ENCODE measurements at regions of chr3 and their contacts with region 1.

Region 1: GRCh38 chr3:66372681-66373350 is 128.0 kb downstream of the LRIG1 start:
- DNase-seq: peak; percentile 51 to 68
- H3K4me3 ChIP-seq: no peak overlapping the region
- H3K27ac ChIP-seq: no peak overlapping the region
- H3K4me1 ChIP-seq: no peaks in the 10 kb centered on the region
- H3K27me3 ChIP-seq: no peaks in the 10 kb centered on the region
- CTCF ChIP-seq: peak; percentile 76 to 96 (median 87)
- EP300 ChIP-seq: no peak
- POLR2A ChIP-seq: peak in 1 of 2 experiments; percentile 34; a peak in 1 of 3 replicates
- RAD21 ChIP-seq: peak; percentile 95 to 99

Region 2: GRCh38 chr3:66196633-66197032 is 176.2 kb before region 1 on chr3:
- CTCF ChIA-PET with region 1: no interaction called
- POLR2A ChIA-PET with region 1: no interaction called
- DNase-seq: no peak
- H3K4me3 ChIP-seq: no peak overlapping the region
- H3K27ac ChIP-seq: no peak overlapping the region
- H3K4me1 ChIP-seq: peaks cover 0 to 2% (median 0%) of the 10 kb centered on the region in 4 experiments; a peak in 2 of 7 replicates
- H3K27me3 ChIP-seq: no peaks in the 10 kb centered on the region; a peak in 1 of 7 replicates
- CTCF ChIP-seq: no peak
- EP300 ChIP-seq: no peak
- POLR2A ChIP-seq: no peak
- RAD21 ChIP-seq: peak in 1 of 2 experiments; percentile 16; a peak in 2 of 4 replicates

Region 3: GRCh38 chr3:66261355-66261754 is 111.5 kb before region 1 on chr3:
- CTCF ChIA-PET with region 1: interaction called, 90 read pairs
- POLR2A ChIA-PET with region 1: interaction called, 5 read pairs
- DNase-seq: no peak
- H3K4me3 ChIP-seq: no peak overlapping the region
- H3K27ac ChIP-seq: no peak overlapping the region
- H3K4me1 ChIP-seq: no peaks in the 10 kb centered on the region
- H3K27me3 ChIP-seq: no peaks in the 10 kb centered on the region
- CTCF ChIP-seq: no peak
- EP300 ChIP-seq: no peak
- POLR2A ChIP-seq: no peak
- RAD21 ChIP-seq: no peak

Region 4: GRCh38 chr3:66276705-66277274 is 96.0 kb before region 1 on chr3:
- CTCF ChIA-PET with region 1: interaction called, 77 read pairs
- POLR2A ChIA-PET with region 1: interaction called, 3 read pairs
- DNase-seq: peak; percentile 7 to 60
- H3K4me3 ChIP-seq: no peak overlapping the region
- H3K27ac ChIP-seq: no peak overlapping the region
- H3K4me1 ChIP-seq: peaks cover 0 to 3% (median 2%) of the 10 kb centered on the region in 4 experiments; a peak in 2 of 7 replicates
- H3K27me3 ChIP-seq: no peaks in the 10 kb centered on the region
- CTCF ChIP-seq: peak in 2 of 3 experiments; percentile 54 to 72; a peak in 3 of 4 replicates
- EP300 ChIP-seq: no peak
- POLR2A ChIP-seq: no peak
- RAD21 ChIP-seq: peak; percentile 87

Region 5: DNA sequence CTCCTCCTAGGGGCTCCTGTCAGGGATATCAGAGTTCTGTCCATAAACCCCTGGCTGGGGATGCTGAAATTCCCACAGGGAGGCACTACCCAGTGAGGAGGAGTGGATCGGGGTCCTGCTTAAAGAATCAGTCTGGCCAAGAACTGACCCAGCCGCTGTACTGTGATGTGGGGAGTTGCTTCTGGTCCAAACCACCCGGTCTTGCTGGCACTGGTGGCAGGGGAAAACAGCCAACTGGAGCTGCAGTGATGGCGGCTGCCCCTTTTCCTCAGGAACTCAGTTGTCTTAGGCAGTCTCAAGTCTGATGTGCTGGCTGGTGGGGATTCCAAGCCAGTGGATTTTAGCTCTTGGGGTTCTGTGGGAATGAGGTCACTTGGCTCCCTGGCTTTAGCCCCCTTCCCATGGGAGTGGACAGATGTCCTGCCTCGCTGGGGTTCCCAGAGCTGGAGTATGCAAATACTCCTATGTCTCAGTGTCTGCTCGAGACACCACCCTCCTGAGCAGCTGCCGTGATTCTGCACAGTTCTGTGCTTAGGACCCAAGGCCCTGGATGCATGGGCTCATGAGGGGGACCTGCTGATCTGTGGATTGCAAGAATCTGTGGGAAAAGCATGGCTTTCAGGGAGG is 55.0 kb before region 1 on chr3:
- CTCF ChIA-PET with region 1: interaction called, 18 read pairs
- POLR2A ChIA-PET with region 1: no interaction called
- DNase-seq: no peak
- H3K4me3 ChIP-seq: no peak overlapping the region
- H3K27ac ChIP-seq: no peak overlapping the region
- H3K4me1 ChIP-seq: peaks cover 3 to 5% (median 4%) of the 10 kb centered on the region in 4 experiments
- H3K27me3 ChIP-seq: no peaks in the 10 kb centered on the region
- CTCF ChIP-seq: no peak
- EP300 ChIP-seq: no peak
- POLR2A ChIP-seq: no peak
- RAD21 ChIP-seq: no peak

Region 6: DNA sequence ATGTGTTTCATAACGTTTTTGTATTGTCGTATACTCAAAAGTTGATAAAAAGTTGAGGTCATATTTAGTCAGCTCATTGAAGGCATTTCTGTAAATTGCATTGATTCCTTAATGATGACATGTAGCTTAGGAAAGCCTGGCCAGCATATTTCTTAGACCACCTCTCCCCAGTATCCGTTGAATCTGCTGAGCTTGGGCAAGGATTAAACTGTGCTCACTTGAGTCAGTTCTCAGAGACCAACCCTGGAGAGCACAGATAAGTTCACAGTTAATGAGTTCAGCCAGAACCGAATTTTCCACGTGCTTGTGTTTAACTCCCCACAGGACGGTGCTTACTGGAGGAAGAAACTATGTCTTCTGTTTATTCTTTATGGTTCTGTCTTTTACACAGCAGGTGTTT is 19.3 kb before region 1 on chr3:
- CTCF ChIA-PET with region 1: interaction called, 15 read pairs
- POLR2A ChIA-PET with region 1: interaction called, 3 read pairs
- DNase-seq: no peak
- H3K4me3 ChIP-seq: no peak overlapping the region
- H3K27ac ChIP-seq: no peak overlapping the region
- H3K4me1 ChIP-seq: peaks cover 0 to 8% (median 2%) of the 10 kb centered on the region in 4 experiments; a peak in 2 of 7 replicates
- H3K27me3 ChIP-seq: no peaks in the 10 kb centered on the region
- CTCF ChIP-seq: no peak
- EP300 ChIP-seq: no peak
- POLR2A ChIP-seq: no peak
- RAD21 ChIP-seq: no peak

Region 7: DNA sequence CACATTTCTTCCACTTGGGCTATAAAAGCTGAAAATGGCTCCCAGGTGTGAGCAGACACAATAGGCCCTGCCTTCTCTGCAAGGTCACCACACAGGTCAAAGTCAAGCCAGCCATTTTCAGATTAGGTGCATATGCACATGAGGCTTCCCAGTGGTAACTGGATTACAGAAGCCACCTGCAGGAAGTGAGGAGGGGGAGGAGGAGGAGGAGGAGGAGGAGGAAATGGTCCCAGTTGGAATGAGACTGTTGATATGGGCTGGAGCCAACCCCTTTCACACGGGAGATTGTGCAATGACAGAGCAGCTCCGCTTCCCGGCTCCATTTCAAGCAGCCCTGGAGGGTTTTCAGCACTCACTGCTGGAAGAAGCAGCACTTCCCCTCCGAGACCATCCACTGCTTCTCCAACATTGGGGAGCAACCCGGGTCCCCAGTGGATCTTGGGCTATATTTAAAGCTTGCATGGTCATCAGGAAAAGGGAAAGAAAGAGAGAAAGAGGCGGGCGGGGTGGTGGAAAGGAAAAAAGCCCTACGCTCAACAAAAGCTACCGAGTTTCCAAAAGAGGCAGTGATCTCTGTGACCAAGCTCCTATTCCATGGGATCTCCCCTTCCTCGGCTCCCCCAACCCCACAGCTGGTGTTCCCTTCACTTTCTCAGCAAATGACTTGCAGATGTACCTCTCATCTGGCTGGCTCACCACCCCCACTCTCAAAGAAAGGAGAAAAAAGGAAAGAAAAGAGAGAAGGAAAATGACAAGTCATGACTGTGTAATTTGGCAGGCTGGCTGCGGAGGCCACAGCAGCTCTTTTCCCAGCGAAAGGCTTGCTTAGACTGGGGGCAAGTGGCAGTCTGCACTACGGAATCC is 69.7 kb after region 1 on chr3:
- CTCF ChIA-PET with region 1: no interaction called
- POLR2A ChIA-PET with region 1: no interaction called
- DNase-seq: peak; percentile 71 to 89
- H3K4me3 ChIP-seq: peak overlapping the region in 3 of 4 experiments; percentile 2 to 49 (median 3); a peak in 5 of 8 replicates
- H3K27ac ChIP-seq: peak overlapping the region; percentile 65
- H3K4me1 ChIP-seq: peaks cover 39 to 53% (median 41%) of the 10 kb centered on the region in 4 experiments
- H3K27me3 ChIP-seq: no peaks in the 10 kb centered on the region
- CTCF ChIP-seq: no peak
- EP300 ChIP-seq: 0 out of 3 replicates have a peak, but pooled peaks of 1 of the 2 experiments have one; percentile 78
- POLR2A ChIP-seq: peak in 1 of 2 experiments; percentile 81; a peak in 2 of 3 replicates
- RAD21 ChIP-seq: no peak; a peak in 1 of 4 replicates